ENCODE measurements at regions of chr10 and their contacts with region 1.

Region 1: GRCh38 chr10:92200564-92200963 is 90.3 kb downstream of the CPEB3 start:
- DNase-seq: no peak
- H3K4me3 ChIP-seq: no peak overlapping the region
- H3K27me3 ChIP-seq: no peaks in the 10 kb centered on the region
- CTCF ChIP-seq: no peak

Region 2: GRCh38 chr10:91887272-91888076 is 313.1 kb before region 1 on chr10:
- CTCF ChIA-PET with region 1: no interaction called
- POLR2A ChIA-PET with region 1: no interaction called
- DNase-seq: no peak
- H3K4me3 ChIP-seq: peak overlapping the region; percentile 48
- H3K27me3 ChIP-seq: no peaks in the 10 kb centered on the region
- CTCF ChIP-seq: no peak

Region 3: DNA sequence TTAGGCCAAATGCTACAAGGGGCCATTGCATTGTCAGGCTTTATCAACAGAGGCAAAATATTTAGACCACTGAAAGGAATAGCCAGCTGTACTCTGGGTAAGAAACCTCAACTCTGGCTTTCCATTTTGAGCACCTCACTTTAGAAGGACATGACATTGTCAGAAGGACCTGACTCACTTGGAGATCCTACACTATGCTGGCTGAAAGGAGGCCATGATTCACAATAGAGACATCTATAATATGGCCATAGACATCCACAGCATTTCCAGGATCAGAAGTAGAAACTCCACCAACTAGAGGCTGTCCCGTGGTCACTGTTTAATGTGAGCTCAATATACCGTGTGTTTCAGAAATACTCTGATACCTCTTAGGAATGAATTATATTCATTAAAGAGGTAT is 136.1 kb before region 1 on chr10:
- CTCF ChIA-PET with region 1: no interaction called
- POLR2A ChIA-PET with region 1: no interaction called
- DNase-seq: no peak
- H3K4me3 ChIP-seq: no peak overlapping the region
- H3K27me3 ChIP-seq: no peaks in the 10 kb centered on the region
- CTCF ChIP-seq: no peak

Region 4: GRCh38 chr10:92298487-92298886 is 97.9 kb after region 1 on chr10:
- CTCF ChIA-PET with region 1: no interaction called
- POLR2A ChIA-PET with region 1: interaction called, 12 read pairs
- DNase-seq: no peak
- H3K4me3 ChIP-seq: no peak overlapping the region
- H3K27me3 ChIP-seq: no peaks in the 10 kb centered on the region
- CTCF ChIP-seq: no peak

Measured in BJ (cell line).